ENCODE measurements at regions of chr4 and their contacts with region 1.

Region 1: DNA sequence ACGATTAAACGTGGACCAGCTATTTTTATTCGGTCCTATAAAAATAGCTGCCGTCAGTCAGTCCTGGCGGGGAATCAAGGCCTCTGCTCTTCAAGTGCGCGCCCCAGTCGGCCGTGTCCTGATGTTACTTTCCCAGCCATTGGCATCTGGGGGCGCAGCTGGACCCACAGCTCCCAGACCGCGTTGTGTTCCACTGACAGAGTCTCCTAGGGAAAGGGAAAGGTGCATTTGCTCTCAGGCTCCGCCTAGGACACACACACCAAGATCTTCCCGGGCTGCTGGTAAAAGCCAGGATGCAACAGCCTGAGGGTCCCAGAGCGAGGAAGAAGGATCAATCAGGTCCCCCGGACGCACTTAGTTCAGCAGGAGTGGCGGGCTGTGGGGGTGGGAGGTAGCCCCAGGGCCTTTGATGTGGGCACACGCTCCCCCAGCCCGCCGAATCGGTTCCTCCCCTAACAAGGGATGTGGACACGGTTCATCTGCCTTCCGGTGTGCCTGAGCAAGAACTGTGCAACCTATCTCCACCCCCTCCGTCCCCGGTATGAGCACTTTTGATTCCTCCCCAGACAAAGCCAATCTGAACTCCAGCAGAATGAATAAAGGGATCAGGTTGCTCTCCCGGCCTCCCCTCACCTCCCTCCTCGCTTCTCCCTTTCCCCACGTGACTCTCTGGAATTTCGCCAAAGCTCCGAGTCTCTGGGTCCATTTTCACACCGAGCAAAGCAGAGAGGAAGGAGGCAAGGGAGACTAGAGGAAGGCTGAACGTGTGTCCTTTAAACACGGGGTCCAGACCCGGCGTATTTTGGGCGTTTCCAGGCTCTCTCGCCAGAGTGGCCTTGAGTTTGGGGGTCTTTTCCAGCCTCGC is 626 bp upstream of the FRAS1 start:
- DNase-seq: peak; percentile 53 to 84
- ATAC-seq: peak; percentile 63 to 86 (median 81)
- H3K4me3 ChIP-seq: peak overlapping the region; percentile 54 to 77 (median 70)
- H3K27ac ChIP-seq: peak overlapping the region; percentile 35 to 93 (median 82)
- H3K4me1 ChIP-seq: peaks cover 0 to 37% (median 16%) of the 10 kb centered on the region in 9 donors
- H3K27me3 ChIP-seq: peaks cover 0 to 64% (median 0%) of the 10 kb centered on the region in 7 donors
- CTCF ChIP-seq: peak in 3 of 9 donors; percentile 19 to 22 (median 22)

Region 2: DNA sequence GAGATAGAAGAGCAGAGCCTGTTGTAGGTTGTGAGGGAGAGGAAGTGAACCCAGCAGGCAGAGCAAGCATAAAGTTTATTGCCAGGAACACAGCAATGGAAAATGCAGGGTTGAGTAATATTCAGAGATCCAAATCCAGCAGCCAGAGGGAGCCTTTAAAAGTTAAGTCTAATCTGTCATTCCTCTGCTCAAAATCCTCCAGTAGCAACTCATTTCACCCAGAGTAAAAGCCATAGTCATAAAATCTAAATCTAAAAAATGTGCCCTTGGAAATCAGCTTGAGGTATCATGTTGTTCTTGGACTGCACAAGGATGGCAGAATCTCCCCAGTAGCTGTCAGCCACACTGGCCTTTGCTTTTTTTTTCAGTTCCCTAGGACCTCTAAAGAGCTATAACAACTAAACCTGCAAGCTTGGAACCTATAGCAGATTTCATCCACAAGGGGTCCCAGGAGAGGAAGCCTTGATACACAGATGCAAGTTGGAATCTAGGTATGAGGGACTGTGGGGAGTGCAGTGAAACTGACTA is 62.2 kb before region 1 on chr4:
- intact Hi-C with region 1: loop called in 1 of 10 experiments (anchors 10 kb)
- DNase-seq: peak in 1 of 2 donors; percentile 11
- ATAC-seq: peak in 7 of 8 donors; percentile 51 to 75 (median 71)
- H3K4me3 ChIP-seq: no peak overlapping the region
- H3K27ac ChIP-seq: no peak overlapping the region
- H3K4me1 ChIP-seq: peaks cover 0 to 4% (median 0%) of the 10 kb centered on the region in 9 donors
- H3K27me3 ChIP-seq: no peaks in the 10 kb centered on the region
- CTCF ChIP-seq: peak in 8 of 9 donors; percentile 9 to 65 (median 55)

Measured in heart right ventricle (tissue), 16 donors.